PC-3 (cell line): ENCODE measurements at regions of chr13 and their contacts with region 1.

Region 1: DNA sequence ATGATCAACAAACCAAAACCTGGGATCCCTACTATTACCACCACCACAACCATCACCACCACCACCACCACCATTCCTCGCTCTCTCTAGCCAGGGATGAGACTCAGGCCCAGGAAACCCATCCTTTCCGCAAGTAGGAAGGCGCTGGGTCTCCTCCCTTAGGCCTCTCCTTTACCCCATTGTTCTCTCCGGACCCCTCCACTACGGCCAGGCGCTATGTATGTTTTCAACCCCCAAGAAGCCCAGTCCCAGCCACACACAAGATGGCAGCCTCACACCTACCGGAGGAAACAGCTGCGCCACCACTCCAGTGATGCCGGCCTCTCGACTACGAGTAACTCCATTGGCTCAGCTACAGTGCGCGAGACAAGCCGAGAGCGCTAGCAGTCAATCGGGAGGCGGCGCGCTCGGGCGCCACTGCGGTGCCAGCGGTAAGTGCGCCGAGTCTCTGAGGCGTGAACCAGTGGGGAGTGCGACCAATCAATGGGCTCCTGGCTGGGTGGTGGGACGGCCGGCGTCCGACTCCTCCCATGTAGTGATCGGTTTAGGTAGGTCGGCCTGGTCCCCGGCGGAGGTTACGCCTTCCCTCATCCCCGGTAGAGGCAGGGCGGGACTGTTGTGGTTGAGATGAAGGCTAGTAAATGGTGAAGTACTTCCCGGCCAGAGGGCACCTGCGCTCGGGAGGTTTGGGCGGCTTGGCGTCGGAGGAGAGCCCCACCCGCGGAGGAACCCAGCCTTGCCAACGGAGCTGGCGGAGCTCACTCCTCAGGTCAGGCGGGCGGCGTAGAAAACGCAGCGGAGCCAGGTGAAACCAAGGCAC is at the starts of genes CAB39L and SETDB2:
- DNase-seq: peak; percentile 96
- ATAC-seq: peak; percentile 92
- H3K4me3 ChIP-seq: peak within 1 kb of the TSS; percentile 85
- H3K27ac ChIP-seq: peak within 1 kb of the TSS; percentile 79
- H3K4me1 ChIP-seq: peaks cover 47% of the 10 kb centered on the region
- H3K27me3 ChIP-seq: no peaks in the 10 kb centered on the region
- CTCF ChIP-seq: no peak; the same call in 1 of the 2 replicates
- total RNA-seq, gene CAB39L: 1.8 and 2.0 TPM in 2 replicates
- total RNA-seq, gene SETDB2: 2.7 and 3.9 TPM in 2 replicates

Region 2: DNA sequence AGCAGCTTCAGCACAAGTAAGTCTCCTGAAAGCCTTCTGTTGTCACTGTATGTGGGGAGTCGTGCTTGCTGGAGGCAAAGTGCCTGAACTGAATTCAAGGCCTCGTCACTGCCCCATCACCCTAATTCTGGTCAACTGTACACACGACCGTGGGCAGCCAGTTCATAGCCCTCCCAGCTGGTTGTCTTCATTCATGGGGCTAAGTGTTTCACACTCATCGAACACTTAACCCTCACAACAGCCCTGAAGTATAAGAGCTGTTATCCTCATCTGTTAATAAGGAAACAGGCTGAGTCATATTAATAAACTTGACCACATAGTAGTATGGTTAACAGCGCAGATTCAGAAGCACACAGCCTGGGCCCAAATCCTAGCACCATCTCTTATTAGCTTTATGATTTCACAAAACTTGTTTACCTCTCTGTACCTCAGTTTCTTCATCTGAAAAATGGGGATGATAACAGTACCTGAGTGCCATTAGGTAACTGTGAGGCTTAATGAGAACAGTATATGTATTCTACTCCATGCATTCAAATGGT is 129.5 kb before region 1 on chr13:
- CTCF ChIA-PET with region 1: interaction called, 11 read pairs
- POLR2A ChIA-PET with region 1: no interaction called
- intact Hi-C with region 1: no loop called
- DNase-seq: peak; percentile 32
- ATAC-seq: peak; percentile 59
- H3K4me3 ChIP-seq: no peak overlapping the region
- H3K27ac ChIP-seq: peak overlapping the region; percentile 85
- H3K4me1 ChIP-seq: peaks cover 17% of the 10 kb centered on the region
- H3K27me3 ChIP-seq: no peaks in the 10 kb centered on the region
- CTCF ChIP-seq: no peak

Region 3: GRCh38 chr13:49495783-49496762 is 52.2 kb after region 1 on chr13 and contains the start of gene PHF11:
- CTCF ChIA-PET with region 1: no interaction called
- POLR2A ChIA-PET with region 1: interaction called, 8 read pairs
- intact Hi-C with region 1: loop called (anchors 2 kb)
- DNase-seq: peak; percentile 60
- ATAC-seq: peak; percentile 74
- H3K4me3 ChIP-seq: peak within 1 kb of the TSS; percentile 72
- H3K27ac ChIP-seq: peak within 1 kb of the TSS; percentile 68
- H3K4me1 ChIP-seq: peaks cover 26% of the 10 kb centered on the region
- H3K27me3 ChIP-seq: no peaks in the 10 kb centered on the region
- CTCF ChIP-seq: no peak
- total RNA-seq, gene PHF11: 7.1 and 7.9 TPM in 2 replicates

Region 4: GRCh38 chr13:49585220-49586157 is 141.6 kb after region 1 on chr13 and contains the start of gene RCBTB1:
- CTCF ChIA-PET with region 1: no interaction called
- POLR2A ChIA-PET with region 1: no interaction called
- intact Hi-C with region 1: loop called (anchors 5 kb)
- DNase-seq: peak; percentile 53
- ATAC-seq: peak; percentile 76
- H3K4me3 ChIP-seq: peak within 1 kb of the TSS; percentile 93
- H3K27ac ChIP-seq: peak within 1 kb of the TSS; percentile 61
- H3K4me1 ChIP-seq: peaks cover 27% of the 10 kb centered on the region
- H3K27me3 ChIP-seq: no peaks in the 10 kb centered on the region
- CTCF ChIP-seq: no peak
- total RNA-seq, gene RCBTB1: 4.9 and 5.4 TPM in 2 replicates